ENCODE measurements at regions of chr20 and their contacts with region 1.

Region 1: DNA sequence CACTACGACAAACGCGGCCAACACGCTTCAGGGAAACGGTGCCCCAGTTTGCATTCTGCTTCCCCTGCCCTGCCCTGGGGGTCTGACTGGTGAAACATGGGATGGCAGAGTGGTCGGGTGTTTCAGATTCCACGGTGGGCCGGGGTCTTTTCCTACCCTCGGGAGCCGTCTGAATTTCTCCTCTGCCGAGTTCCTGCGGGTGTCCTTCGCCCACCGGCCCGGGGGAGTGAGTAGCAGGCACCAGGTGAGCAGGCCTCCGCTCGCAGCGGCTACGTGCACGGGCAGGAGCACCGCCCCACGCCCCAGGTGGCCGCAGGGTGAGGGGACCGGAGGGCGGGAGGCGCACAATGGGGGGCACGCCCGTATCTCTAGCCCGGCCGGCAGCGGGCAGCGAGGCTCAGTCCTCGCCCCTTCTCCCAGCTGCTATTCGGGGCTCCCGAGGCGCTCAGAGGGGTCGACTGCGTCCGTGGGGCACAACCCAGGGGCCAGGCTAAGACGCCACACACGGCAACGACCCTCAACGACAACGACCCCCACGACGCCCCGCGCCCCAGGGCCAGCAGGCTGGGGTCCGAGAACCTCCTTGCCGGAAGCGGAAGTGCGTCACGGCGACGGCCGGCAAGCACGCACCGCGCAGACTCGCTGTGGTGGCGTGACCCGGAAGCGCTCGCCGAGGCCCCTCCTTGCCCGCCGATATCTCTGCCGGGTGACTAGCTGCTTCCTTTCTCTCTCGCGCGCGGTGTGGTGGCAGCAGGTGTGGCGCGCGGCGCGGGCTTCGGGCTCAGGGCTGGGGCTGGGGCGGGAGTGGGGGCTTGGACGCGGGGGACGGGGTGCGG is at the start of gene RPS21:
- DNase-seq: peak; percentile 94
- ATAC-seq: peak; percentile 92
- H3K4me3 Mint-ChIP-seq: peak within 1 kb of the TSS; percentile 87
- H3K27ac Mint-ChIP-seq: peak within 1 kb of the TSS; percentile 93
- H3K4me1 Mint-ChIP-seq: peaks cover 35% of the 10 kb centered on the region
- H3K27me3 Mint-ChIP-seq: no peaks in the 10 kb centered on the region
- total RNA-seq, gene RPS21: 2,045 to 2,157 TPM

Region 2: GRCh38 chr20:62409931-62410745 is 23.5 kb after region 1 on chr20:
- POLR2A ChIA-PET with region 1: interaction called, 13 read pairs
- DNase-seq: peak; percentile 63
- ATAC-seq: no peak
- H3K4me3 Mint-ChIP-seq: peak overlapping the region; percentile 35
- H3K27ac Mint-ChIP-seq: no peak overlapping the region
- H3K4me1 Mint-ChIP-seq: peaks cover 9% of the 10 kb centered on the region
- H3K27me3 Mint-ChIP-seq: peaks cover 3% of the 10 kb centered on the region

Measured in activated naive CD8-positive, alpha-beta T cell treated with anti-CD3 and anti-CD28 coated beads, Interleukin-2, amount 10 ng/mL, durations not matched to agents 7 days and 5 days (primary cell).